HCT116 (cell line): ENCODE measurements at regions of chr11 and their contacts with region 1.

Region 1: DNA sequence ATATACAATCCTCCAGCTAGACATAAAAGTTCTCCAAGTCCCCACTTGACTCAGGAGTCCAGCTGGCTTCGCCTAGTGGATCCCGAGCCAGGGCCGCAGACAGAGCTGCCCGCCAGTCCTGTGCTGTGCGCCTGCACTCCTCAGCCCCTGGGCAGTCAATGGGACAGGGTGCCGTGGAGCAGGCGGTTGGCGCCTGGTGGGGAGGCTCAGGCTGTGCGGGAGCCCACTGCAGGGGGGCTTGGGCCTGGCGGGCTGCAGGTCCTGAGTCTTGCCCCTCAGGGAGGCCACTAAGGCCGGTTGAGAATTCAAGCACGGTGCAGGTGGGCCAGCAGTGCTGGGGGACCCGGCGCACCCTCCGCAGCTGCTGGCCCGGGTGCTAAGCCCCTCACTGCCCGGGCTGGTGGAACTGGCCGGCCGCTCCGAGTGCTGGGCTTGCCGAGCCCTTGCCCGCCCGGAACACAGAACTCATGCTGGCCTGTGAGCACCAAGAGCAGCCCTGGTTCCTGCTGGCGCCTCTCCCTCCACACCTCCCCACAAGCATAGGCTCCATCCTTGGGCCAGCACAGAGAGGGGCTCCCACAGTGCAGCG is 884.8 kb upstream of the LRRC4C start:
- DNase-seq: no peak
- ATAC-seq: no peak
- H3K4me3 ChIP-seq: no peak overlapping the region
- H3K27ac ChIP-seq: no peak overlapping the region
- H3K4me1 ChIP-seq: no peaks in the 10 kb centered on the region
- H3K27me3 ChIP-seq: no peaks in the 10 kb centered on the region
- CTCF ChIP-seq: no peak
- POLR2A ChIP-seq: no peak
- RAD21 ChIP-seq: no peak

Region 2: GRCh38 chr11:42239188-42239587 is 105.1 kb before region 1 on chr11:
- CTCF ChIA-PET with region 1: no interaction called
- POLR2A ChIA-PET with region 1: no interaction called
- RAD21 ChIA-PET with region 1: no interaction called
- intact Hi-C with region 1: no loop called
- DNase-seq: no peak
- ATAC-seq: no peak
- H3K4me3 ChIP-seq: no peak overlapping the region
- H3K27ac ChIP-seq: no peak overlapping the region
- H3K4me1 ChIP-seq: no peaks in the 10 kb centered on the region
- H3K27me3 ChIP-seq: no peaks in the 10 kb centered on the region
- CTCF ChIP-seq: no peak
- POLR2A ChIP-seq: no peak
- RAD21 ChIP-seq: no peak

Region 3: GRCh38 chr11:42363701-42364100 is 19.4 kb after region 1 on chr11:
- CTCF ChIA-PET with region 1: no interaction called
- POLR2A ChIA-PET with region 1: no interaction called
- RAD21 ChIA-PET with region 1: no interaction called
- intact Hi-C with region 1: loop called (anchors 1 kb)
- DNase-seq: no peak
- ATAC-seq: no peak
- H3K4me3 ChIP-seq: no peak overlapping the region
- H3K27ac ChIP-seq: no peak overlapping the region
- H3K4me1 ChIP-seq: no peaks in the 10 kb centered on the region
- H3K27me3 ChIP-seq: no peaks in the 10 kb centered on the region
- CTCF ChIP-seq: no peak
- POLR2A ChIP-seq: no peak
- RAD21 ChIP-seq: no peak